HEK293 (cell line): ENCODE measurements at regions of chr11 and their contacts with region 1.

Region 1: GRCh38 chr11:120801801-120802689 is 221.9 kb upstream of the TBCEL start:
- H3K4me3 ChIP-seq: no peak overlapping the region
- H3K27ac ChIP-seq: no peak overlapping the region
- H3K4me1 ChIP-seq: no peaks in the 10 kb centered on the region
- CTCF ChIP-seq: 0 out of 2 replicates have a peak, but pooled peaks have one; percentile 12

Region 2: GRCh38 chr11:120482149-120482548 is 319.9 kb before region 1 on chr11:
- CTCF ChIA-PET with region 1: no interaction called
- POLR2A ChIA-PET with region 1: no interaction called
- H3K4me3 ChIP-seq: no peak overlapping the region
- H3K27ac ChIP-seq: no peak overlapping the region
- H3K4me1 ChIP-seq: no peaks in the 10 kb centered on the region
- CTCF ChIP-seq: no peak

Region 3: DNA sequence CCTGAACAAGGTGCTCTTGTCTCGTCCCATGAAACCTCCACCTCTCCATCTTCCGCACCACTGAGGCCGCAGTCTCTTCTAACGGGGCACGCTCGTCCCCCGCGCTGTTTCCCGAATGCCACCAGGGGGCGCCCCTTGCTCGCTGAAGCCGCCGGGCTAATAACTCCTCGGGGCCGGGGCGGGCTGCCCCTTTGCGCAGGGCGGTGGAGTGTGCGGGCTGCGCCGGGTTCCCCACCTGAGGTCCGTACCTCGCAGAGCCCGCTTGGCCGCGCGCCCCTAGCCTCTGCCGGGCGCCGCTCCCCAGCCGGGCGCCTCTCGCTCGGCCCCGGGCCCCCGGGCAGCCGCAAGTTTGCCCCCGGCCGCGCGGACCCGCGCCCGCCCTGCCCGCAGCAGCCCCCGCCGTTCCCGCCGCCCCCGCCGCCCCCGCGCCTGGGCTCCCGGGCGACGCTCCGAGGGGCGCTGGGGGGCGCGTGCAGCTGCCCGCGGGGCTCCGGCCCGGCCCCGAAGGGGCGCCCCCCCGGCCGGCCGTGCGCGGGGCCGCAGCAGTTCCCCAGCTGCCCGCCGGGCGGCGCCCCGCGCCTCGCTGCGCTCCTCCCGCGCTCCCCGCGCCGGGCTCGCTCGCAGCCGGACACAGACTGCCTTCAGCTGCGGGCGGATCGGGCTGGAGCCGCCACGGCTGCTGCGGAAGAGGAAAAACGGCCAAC is 290.8 kb before region 1 on chr11 and contains the start of gene GRIK4:
- CTCF ChIA-PET with region 1: interaction called, 13 read pairs
- POLR2A ChIA-PET with region 1: no interaction called
- H3K4me3 ChIP-seq: peak within 1 kb of the TSS; percentile 42
- H3K27ac ChIP-seq: peak within 1 kb of the TSS; percentile 53; the same call in 1 of the 2 replicates
- H3K4me1 ChIP-seq: no peaks in the 10 kb centered on the region
- CTCF ChIP-seq: peak; percentile 90